BJ (cell line): ENCODE measurements at regions of chr1 and their contacts with region 1.

Region 1: DNA sequence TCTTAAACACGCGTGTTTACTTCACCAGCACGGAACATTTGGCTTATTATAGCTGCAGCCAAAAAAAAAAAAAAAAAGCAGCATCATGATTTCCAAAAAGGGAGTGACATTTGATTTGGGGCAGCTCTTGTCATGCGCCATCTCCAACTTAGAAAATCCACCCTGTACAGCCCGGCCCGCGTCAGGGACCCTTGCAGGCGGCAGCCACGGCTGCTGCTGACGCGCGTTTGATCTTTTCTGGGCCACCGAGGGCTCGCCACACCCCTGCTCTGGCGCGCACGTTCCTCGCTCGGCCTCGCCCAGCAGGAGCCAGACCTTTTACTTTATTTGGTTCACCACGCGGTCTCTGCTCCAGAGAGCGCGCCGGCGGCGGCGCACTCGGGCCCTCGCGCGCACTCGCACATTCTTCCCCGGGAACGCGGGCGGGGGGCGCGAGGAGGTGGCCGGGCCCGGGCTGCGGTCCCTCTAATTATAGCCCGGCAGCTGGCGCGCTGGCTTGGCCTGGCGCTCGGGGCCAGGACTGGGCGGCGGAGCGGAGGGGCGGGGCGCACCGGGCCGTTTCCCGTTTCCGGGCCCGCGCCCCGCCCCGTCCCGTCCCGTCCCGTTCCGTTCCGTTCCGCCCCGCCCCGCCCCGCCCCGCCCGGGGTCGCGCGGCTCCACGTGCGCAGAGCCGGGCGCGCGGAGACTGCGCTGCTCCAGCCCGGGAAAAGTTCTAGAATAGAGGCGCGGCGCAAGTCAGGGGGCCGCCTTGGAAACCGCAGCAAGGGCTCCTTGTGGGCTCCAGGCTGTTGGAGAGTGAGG is 10.2 kb downstream of the IRF2BP2 start:
- DNase-seq: no peak
- H3K4me3 ChIP-seq: peak overlapping the region; percentile 51
- H3K27me3 ChIP-seq: no peaks in the 10 kb centered on the region
- CTCF ChIP-seq: 0 out of 2 replicates have a peak, but pooled peaks have one; percentile 9

Region 2: GRCh38 chr1:234535763-234536515 is 63.9 kb before region 1 on chr1:
- CTCF ChIA-PET with region 1: interaction called, 6 read pairs
- POLR2A ChIA-PET with region 1: interaction called, 10 read pairs
- DNase-seq: no peak
- H3K4me3 ChIP-seq: no peak overlapping the region
- H3K27me3 ChIP-seq: no peaks in the 10 kb centered on the region
- CTCF ChIP-seq: no peak

Region 3: GRCh38 chr1:235030919-235031596 is 431.2 kb after region 1 on chr1:
- CTCF ChIA-PET with region 1: no interaction called
- POLR2A ChIA-PET with region 1: interaction called, 13 read pairs
- DNase-seq: no peak
- H3K4me3 ChIP-seq: no peak overlapping the region
- H3K27me3 ChIP-seq: no peaks in the 10 kb centered on the region
- CTCF ChIP-seq: no peak

Region 4: GRCh38 chr1:235093696-235094592 is 494.1 kb after region 1 on chr1:
- CTCF ChIA-PET with region 1: interaction called, 10 read pairs
- POLR2A ChIA-PET with region 1: no interaction called
- DNase-seq: no peak
- H3K4me3 ChIP-seq: no peak overlapping the region
- H3K27me3 ChIP-seq: no peaks in the 10 kb centered on the region; the same call in 1 of the 2 replicates
- CTCF ChIP-seq: peak; percentile 95